Sciatic nerve (tissue), 2 donors: ENCODE measurements at regions of chr7 and their contacts with region 1.

Region 1: GRCh38 chr7:90580051-90580450 is 16.1 kb upstream of the CDK14 start:
- DNase-seq: no peak
- ATAC-seq: no peak

Region 2: DNA sequence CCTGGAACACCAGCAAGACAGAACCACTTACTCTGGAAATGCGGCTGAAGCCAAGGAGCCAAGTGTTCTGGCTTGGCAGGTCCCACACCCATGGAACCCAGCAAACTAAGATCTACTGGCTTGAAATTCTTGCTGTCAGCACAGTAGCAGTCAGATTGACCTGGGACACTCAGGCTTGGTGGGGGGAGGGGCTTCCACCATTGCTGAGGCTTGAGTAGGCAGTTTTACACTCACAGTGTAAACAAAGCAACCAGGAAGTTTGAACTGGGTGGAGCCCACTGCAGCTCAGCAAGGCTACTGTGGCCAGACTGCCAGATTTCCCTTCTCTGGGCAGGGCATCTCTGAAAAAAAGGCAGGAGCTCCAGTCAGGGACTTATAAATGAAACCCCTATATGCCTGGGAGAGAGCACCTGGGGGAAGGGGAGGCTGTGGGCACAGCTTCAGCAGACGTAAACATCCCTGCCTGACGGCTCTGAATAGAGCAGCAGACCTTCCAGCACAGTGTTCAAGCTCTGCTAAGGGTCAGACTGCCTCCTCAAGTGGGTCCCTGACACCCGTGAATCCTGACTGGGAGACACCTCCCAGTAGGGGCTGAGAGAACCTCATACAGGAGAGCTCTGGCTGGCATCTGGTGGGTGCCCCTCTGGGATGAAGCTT is 1179.3 kb after region 1 on chr7:
- intact Hi-C with region 1: loop called (anchors 5 kb)
- DNase-seq: no peak
- ATAC-seq: no peak